ENCODE measurements at regions of chr18 and their contacts with region 1.

Region 1: DNA sequence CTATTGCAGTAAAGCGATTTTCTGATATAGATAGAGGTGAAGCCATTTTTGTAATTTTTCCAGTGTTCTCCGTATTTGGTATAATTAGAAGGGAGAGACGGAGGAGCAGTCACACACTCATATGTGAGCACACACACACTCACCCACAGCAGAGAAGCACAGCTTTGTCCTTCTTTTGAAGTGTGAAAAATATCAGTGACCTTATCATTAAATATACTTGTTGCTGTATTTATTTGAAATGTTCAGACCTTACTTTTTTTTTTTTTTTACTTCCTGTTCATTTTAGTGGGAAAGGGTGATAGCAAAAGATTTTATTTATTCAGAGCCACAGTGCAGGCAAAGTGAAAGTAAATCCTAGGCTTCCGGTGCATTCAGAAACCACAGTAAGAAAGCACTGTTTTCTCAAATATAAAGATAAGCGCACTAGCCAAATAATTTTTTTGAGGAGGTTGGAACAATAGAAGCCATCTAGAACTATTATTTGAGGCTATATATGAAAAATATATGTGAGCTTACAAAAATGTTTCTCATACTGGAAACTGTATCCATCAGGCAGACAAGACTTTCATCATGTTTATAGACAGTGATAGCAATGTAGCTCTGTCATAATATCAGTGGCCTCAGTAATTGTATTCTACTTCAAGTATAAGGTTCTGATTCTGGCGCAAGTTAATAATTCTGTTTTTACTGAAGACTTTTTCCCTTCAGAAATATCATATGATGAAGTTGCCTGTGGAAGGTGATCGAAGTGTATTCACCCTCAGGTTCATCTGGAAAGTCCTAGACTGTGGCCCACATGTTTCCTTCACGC is 37.2 kb downstream of the TSHZ1 start:
- DNase-seq: no peak
- H3K4me3 ChIP-seq: peak overlapping the region; percentile 34
- H3K27me3 ChIP-seq: no peaks in the 10 kb centered on the region
- CTCF ChIP-seq: no peak

Region 2: GRCh38 chr18:75066936-75067335 is 180.9 kb before region 1 on chr18:
- CTCF ChIA-PET with region 1: no interaction called
- POLR2A ChIA-PET with region 1: no interaction called
- DNase-seq: no peak
- H3K4me3 ChIP-seq: no peak overlapping the region
- H3K27me3 ChIP-seq: no peaks in the 10 kb centered on the region
- CTCF ChIP-seq: no peak

Region 3: DNA sequence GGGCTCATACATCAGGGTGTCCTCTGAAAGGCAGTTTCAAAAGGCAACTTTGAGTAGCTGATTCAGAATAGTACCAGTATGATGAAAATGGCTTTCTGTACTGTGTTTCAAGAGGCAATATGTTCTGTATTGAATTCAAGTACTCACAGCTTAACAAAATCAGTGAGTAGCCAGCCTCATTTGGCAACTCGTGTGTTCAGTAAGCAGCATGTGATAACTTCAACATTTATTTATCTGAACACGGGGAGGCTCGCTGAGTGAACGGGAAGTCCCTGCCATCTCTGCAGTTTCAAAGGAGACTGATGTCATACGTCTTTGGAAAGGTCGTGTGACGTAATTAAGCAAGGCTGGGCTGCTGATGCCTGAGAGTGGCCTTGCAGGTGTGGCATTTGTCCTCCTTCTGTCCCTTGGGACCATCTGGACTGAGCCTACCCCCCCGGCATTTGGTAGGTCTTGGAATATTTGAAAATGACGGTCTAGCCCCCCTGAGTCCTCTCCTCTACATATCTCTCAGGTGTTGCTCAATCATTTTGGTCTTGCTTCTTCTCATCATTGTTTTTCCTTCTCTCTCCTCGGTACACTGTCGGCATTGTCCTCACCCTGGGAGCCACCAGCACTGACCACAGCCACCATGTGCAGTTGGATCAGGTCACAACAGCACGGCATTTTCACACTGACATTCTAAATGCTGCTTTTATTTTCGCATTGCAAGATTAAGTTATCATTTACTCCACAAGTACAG is 116.9 kb after region 1 on chr18:
- CTCF ChIA-PET with region 1: no interaction called
- POLR2A ChIA-PET with region 1: interaction called, 11 read pairs
- DNase-seq: no peak
- H3K4me3 ChIP-seq: no peak overlapping the region
- H3K27me3 ChIP-seq: peaks cover 2% of the 10 kb centered on the region
- CTCF ChIP-seq: no peak